Activated naive CD4-positive, alpha-beta T cell treated with anti-CD3 and anti-CD28 coated beads for 36 hours (primary cell): ENCODE measurements at regions of chr4 and their contacts with region 1.

Region 1: GRCh38 chr4:121800961-121801714 is at the start of gene EXOSC9:
- DNase-seq: peak; percentile 95
- H3K4me3 Mint-ChIP-seq: peak within 1 kb of the TSS; percentile 89
- H3K27ac Mint-ChIP-seq: peak within 1 kb of the TSS; percentile 98
- H3K4me1 Mint-ChIP-seq: peaks cover 46% of the 10 kb centered on the region
- H3K27me3 Mint-ChIP-seq: no peaks in the 10 kb centered on the region
- total RNA-seq, gene EXOSC9: 57.7 to 58.7 TPM

Region 2: GRCh38 chr4:120769227-120769626 is 1031.9 kb before region 1 on chr4:
- CTCF ChIA-PET with region 1: no interaction called
- intact Hi-C with region 1: no loop called
- DNase-seq: no peak
- H3K4me3 Mint-ChIP-seq: no peak overlapping the region
- H3K27ac Mint-ChIP-seq: no peak overlapping the region
- H3K4me1 Mint-ChIP-seq: no peaks in the 10 kb centered on the region
- H3K27me3 Mint-ChIP-seq: no peaks in the 10 kb centered on the region

Region 3: DNA sequence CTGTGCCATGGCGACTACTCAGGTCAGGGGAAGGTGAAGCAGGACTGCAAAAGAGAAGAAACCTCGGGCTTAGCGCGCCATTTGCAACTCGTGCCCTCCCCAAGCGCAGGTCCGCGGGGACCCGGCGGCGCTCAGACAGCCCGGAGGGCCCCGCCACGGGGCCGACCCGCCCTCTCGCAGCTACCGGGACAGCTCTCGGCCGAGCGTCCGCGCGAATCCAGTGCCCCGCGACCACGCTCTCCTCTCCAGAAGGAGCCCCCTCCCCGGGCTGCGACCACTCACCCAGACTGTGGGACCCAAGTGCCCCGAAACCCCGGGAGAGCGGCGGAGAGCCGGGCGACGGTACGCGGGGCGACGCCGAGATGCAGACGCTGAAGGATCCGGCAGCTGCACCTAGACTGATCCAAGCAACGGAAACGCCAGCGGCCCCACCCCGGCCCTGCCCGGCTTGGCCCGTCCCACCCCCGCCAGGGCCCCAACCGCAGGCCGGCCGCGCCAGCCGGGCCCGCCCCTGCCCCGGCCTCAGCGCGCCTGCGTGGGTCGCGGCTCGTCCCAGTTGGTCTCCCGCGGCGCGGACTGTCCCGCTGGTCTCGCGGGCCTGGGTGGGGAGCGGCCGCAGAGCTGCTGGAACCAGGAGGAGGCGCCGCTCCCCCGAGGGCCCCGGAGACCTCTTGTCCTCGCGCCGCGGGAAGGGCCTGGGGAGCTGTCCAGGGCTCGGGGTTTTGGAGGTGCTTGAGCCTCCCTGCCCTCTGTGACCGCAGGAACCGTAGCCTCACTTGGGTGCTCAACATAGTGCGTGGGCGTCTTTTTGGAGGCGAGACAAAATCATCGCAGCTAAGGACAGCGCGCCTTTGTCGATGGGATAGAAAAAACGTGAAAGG is 104.3 kb before region 1 on chr4 and contains the start of gene ANXA5:
- CTCF ChIA-PET with region 1: no interaction called
- intact Hi-C with region 1: loop called (anchors 1 kb)
- DNase-seq: peak; percentile 79
- H3K4me3 Mint-ChIP-seq: peak within 1 kb of the TSS; percentile 93
- H3K27ac Mint-ChIP-seq: peak within 1 kb of the TSS; percentile 91
- H3K4me1 Mint-ChIP-seq: peaks cover 11% of the 10 kb centered on the region
- H3K27me3 Mint-ChIP-seq: peaks cover 14% of the 10 kb centered on the region
- total RNA-seq, gene ANXA5: 98.4 to 99.5 TPM

Region 4: DNA sequence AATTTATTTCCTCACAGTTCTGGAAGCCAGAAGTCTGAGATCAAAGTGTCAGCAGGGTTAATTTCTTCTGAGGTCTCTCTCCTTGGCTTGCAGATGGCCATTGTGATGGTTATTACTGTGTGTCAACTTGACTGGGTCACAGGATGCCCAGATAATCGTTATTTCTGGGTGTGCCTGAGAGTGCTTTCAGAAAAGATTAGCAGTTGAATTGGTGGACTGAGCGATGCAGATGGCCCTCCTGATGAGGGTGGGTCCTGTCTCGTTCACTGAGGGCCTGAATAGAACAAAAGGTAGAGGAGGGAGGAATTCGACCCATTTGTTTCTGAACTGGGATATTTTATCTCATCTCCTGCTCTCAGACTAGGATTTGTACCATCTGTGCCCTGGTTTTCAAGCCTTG is 51.9 kb before region 1 on chr4:
- CTCF ChIA-PET with region 1: no interaction called
- intact Hi-C with region 1: no loop called
- DNase-seq: no peak
- H3K4me3 Mint-ChIP-seq: no peak overlapping the region
- H3K27ac Mint-ChIP-seq: no peak overlapping the region
- H3K4me1 Mint-ChIP-seq: no peaks in the 10 kb centered on the region
- H3K27me3 Mint-ChIP-seq: peaks cover 25% of the 10 kb centered on the region

Region 5: DNA sequence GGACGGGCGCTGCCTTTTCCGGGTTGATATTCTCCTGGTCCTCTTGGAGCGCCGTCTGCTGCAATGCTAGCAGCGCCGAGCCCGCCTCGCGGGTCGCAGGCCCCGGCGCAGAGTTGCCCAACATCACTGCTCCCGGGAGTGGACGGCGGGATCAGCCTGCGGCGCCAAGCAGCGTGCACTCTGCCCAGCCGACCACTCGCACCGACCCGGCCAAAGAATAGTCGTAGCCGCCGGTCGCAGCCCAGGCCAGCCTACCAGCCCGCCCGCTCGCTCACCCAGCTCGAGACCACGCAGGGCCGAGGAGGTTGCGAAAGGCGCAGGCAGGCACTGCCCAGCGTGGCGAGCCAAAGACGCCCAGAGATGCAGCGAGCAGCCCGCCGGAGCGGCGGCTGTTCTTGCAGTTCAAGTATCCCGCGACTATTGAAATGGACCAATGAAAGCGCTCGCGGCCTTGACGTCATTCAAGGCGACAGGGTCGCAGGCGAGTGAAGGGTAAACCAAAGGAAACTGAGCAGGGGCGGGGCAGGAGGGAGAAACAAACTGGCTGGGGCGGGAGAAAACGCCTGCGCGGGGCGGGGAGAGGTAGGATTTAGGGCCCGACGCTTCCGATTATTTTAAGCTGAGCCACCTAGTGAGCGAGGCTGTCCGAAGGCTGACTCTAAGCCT is 22.5 kb after region 1 on chr4 and contains the start of gene CCNA2:
- CTCF ChIA-PET with region 1: interaction called, 5 read pairs
- intact Hi-C with region 1: loop called (anchors 1 kb)
- DNase-seq: peak; percentile 99
- H3K4me3 Mint-ChIP-seq: peak within 1 kb of the TSS; percentile 98
- H3K27ac Mint-ChIP-seq: peak within 1 kb of the TSS; percentile 86
- H3K4me1 Mint-ChIP-seq: peaks cover 20% of the 10 kb centered on the region
- H3K27me3 Mint-ChIP-seq: no peaks in the 10 kb centered on the region
- total RNA-seq, gene CCNA2: 133 to 138 TPM

Region 6: DNA sequence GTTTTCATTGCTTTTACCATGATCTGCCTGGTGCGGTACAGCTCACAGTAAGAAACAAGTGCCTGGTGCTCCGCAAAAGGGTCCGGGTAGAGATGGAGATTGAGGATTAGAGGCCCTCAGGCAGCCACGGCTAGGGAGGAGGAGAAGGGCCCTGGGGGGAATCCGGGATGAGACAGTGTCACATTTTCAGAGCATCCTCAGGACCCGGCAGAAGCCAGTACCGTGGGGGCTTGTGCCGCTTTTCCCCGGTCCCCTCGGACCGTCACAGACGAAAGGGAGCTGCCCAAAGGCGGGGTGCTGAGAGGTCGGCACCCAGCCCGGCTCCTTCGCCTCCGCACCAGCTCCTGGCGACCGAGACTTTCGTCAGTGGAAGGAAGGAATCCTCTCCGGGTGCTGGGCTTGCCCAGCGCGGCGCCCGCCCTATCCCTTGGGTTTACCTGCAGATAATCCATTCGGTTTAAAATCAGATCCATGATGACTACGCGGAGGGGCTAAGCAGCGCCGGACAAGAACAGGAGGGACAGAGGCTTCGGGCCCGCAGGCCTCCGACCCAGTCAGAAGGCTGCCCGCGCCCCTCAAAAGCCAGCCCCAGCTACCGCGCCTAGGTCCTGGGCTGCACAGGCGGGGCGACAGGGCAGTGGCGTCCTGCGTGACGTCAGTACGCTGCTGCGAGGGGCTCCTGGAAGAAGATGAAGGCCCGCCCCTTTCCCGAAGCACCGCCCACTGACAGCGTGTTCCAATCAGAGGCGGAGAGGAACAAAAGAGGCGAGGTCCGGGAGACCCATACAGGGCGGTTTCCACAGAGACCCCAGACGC is 68.9 kb after region 1 on chr4 and contains the start of gene BBS7:
- CTCF ChIA-PET with region 1: interaction called, 4 read pairs
- intact Hi-C with region 1: loop called (anchors 1 kb)
- DNase-seq: peak; percentile 99
- H3K4me3 Mint-ChIP-seq: peak within 1 kb of the TSS; percentile 95
- H3K27ac Mint-ChIP-seq: peak within 1 kb of the TSS; percentile 76
- H3K4me1 Mint-ChIP-seq: peaks cover 30% of the 10 kb centered on the region
- H3K27me3 Mint-ChIP-seq: peaks cover 11% of the 10 kb centered on the region
- total RNA-seq, gene BBS7: 16.6 to 19.4 TPM

Region 7: DNA sequence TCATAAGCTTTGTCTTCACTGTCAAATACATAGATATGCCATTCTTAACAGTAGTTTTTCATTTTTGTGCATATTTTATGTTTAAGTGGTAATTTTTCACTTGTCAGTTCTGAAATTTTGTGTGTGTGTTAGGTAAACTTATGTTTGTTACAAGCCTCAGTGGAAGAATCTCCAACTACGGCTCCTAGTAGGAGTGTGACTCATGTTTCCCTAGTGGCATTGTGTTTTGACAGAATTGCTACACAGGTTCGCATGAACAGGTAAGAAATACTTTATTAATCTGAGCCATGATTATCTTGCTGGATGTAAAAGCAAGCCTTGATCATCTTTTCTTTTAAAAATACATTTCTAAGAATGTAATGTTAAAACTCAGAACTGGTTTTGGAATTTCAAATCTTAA is 445.4 kb after region 1 on chr4:
- CTCF ChIA-PET with region 1: no interaction called
- intact Hi-C with region 1: no loop called
- DNase-seq: no peak
- H3K4me3 Mint-ChIP-seq: no peak overlapping the region
- H3K27ac Mint-ChIP-seq: no peak overlapping the region
- H3K4me1 Mint-ChIP-seq: no peaks in the 10 kb centered on the region
- H3K27me3 Mint-ChIP-seq: no peaks in the 10 kb centered on the region